Heart right ventricle (tissue), 16 donors: ENCODE measurements at regions of chr1 and their contacts with region 1.

Region 1: DNA sequence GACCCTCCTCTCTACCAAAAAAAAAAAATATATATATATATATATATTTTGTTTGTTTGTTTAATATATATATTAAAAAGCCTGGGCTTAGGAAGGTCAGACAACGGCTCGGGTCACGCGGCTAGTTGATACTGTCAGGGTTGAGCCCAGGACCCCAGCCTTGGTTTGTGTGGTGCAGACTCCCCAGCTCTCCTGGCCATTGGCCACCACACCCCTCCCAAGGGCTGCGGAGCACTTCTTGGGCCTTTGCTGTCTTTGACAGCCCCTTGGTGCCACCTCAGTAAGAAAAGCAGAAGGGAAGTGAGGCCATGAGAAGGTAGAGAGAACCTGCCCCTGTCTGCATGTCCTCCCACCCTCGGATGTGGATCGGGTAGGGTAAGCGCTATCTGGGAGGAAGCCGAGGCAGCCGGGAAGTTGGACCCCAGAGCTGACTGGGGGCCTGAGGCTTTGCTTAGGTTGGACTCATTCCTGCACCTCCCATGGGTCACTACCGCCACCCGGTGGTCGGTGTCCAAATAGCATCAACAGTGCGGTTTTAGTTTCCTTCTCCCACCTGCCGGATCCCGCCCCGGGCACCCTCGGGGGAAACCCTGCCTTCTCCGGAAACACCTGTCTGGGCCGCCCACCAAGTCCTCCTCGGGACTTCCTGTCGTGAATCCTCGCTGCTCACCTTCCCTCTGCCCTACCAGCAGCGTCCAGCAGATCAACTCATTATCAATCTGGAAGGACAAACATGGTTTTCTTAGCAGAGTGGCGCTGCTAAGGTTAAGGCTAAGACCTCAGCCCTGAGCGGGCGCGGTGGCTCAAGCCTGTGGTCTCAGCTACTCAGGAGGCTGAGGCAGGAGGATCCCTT is 29.8 kb upstream of the GNPAT start:
- DNase-seq: peak; percentile 71 to 79
- ATAC-seq: peak; percentile 73 to 87 (median 84)
- H3K4me3 ChIP-seq: peak overlapping the region in 9 of 10 donors; percentile 14 to 54 (median 44)
- H3K27ac ChIP-seq: no peak overlapping the region
- H3K4me1 ChIP-seq: peaks cover 0 to 11% (median 0%) of the 10 kb centered on the region in 9 donors
- H3K27me3 ChIP-seq: peaks cover 0 to 24% (median 0%) of the 10 kb centered on the region in 7 donors
- CTCF ChIP-seq: peak; percentile 75 to 96 (median 94)

Region 2: DNA sequence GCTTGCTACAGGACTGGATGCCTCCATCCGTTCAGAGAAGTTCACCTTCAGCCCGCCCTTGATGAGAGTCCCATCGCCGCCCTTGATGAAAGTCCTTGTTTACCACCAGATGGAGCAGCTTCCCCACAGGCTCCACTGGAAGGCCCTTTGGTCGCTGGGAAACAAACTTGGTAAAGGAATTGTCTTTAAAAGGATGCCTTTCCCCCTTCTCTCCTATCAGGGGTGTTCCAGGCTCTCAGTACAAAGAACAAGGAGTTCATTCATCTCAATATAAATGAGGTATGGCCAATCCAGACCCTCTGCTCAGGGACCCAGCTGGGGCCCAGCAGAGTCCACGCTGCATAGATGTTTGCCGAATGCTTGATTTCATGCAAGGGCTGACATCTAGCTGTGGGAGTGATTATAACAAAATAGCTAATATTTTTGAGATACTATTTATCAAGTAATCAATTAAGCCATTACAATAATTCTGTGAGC is 413.3 kb before region 1 on chr1:
- intact Hi-C with region 1: loop called (anchors 2 to 10 kb)
- DNase-seq: peak; percentile 41 to 75
- ATAC-seq: peak; percentile 81 to 93 (median 90)
- H3K4me3 ChIP-seq: no peak overlapping the region
- H3K27ac ChIP-seq: no peak overlapping the region
- H3K4me1 ChIP-seq: no peaks in the 10 kb centered on the region
- H3K27me3 ChIP-seq: no peaks in the 10 kb centered on the region
- CTCF ChIP-seq: peak; percentile 60 to 90 (median 78)

Region 3: GRCh38 chr1:230917284-230918135 is 293.7 kb before region 1 on chr1:
- intact Hi-C with region 1: loop called (anchors 1 to 10 kb)
- DNase-seq: peak; percentile 49 to 74
- ATAC-seq: peak; percentile 69 to 89 (median 80)
- H3K4me3 ChIP-seq: no peak overlapping the region
- H3K27ac ChIP-seq: no peak overlapping the region
- H3K4me1 ChIP-seq: peaks cover 0 to 6% (median 0%) of the 10 kb centered on the region in 9 donors
- H3K27me3 ChIP-seq: no peaks in the 10 kb centered on the region
- CTCF ChIP-seq: peak; percentile 55 to 73 (median 61)

Region 4: GRCh38 chr1:230922620-230923019 is 288.6 kb before region 1 on chr1:
- intact Hi-C with region 1: loop called (anchors 1 to 10 kb)
- DNase-seq: no peak
- ATAC-seq: no peak
- H3K4me3 ChIP-seq: no peak overlapping the region
- H3K27ac ChIP-seq: no peak overlapping the region
- H3K4me1 ChIP-seq: peaks cover 0 to under 1% (median 0%) of the 10 kb centered on the region in 9 donors
- H3K27me3 ChIP-seq: no peaks in the 10 kb centered on the region
- CTCF ChIP-seq: no peak

Region 5: GRCh38 chr1:231091831-231092301 is 119.4 kb before region 1 on chr1:
- intact Hi-C with region 1: loop called in 1 of 10 experiments (anchors 10 kb)
- DNase-seq: peak in 1 of 2 donors; percentile 22
- ATAC-seq: peak in 1 of 8 donors; percentile 42
- H3K4me3 ChIP-seq: no peak overlapping the region
- H3K27ac ChIP-seq: no peak overlapping the region
- H3K4me1 ChIP-seq: peaks cover 0 to 17% (median 7%) of the 10 kb centered on the region in 9 donors
- H3K27me3 ChIP-seq: peaks cover 0 to 8% (median 0%) of the 10 kb centered on the region in 7 donors
- CTCF ChIP-seq: peak in 8 of 9 donors; percentile 19 to 61 (median 38)